T-cell (primary cell): ENCODE measurements at regions of chr13 and their contacts with region 1.

Region 1: DNA sequence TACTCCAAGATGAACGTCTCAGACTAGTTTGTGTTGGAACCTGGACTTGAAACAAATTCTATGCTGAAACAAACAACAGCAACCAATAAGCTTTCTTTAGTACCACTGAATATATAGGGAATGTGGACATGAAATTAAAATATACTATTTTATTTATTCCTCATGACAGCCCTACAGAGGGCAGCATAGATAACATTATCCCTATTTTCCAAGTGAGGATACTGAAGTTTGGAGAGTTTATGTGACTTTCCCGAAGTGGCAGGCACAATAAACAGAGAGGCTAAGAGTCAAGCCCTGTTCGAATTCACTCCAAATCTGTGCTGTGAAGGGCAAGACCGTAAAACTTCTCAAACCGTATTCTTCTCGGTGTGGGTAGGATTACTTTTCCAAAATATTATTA is 509.9 kb upstream of the GPC6 start:
- DNase-seq: no peak
- ATAC-seq: no peak
- H3K4me3 ChIP-seq: no peak overlapping the region
- H3K4me3 Mint-ChIP-seq: no peak overlapping the region
- H3K27ac ChIP-seq: no peak overlapping the region
- H3K27ac Mint-ChIP-seq: no peak overlapping the region
- H3K4me1 ChIP-seq: no peaks in the 10 kb centered on the region
- H3K4me1 Mint-ChIP-seq: no peaks in the 10 kb centered on the region
- H3K27me3 ChIP-seq: no peaks in the 10 kb centered on the region
- H3K27me3 Mint-ChIP-seq: no peaks in the 10 kb centered on the region

Region 2: DNA sequence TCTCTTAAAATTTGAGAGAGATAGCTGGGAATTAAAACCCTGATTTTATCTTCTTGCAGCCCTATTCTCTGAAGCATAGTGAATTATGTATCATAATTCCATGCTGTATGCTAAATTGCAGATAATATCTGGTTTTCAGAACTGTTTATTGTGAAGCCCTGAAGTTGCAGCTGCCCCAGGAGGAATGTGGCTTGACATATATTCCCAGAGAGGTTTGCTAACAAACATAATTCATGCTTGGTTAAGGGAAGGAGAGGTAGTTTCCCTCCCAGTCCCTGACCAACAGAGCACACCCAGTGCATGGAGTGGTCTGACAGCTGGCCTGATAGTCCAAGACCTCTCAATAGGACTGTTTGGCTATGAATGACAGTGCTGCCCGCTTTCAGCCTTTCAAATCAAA is 1869.8 kb before region 1 on chr13:
- CTCF ChIA-PET with region 1: interaction called in 1 of 2 experiments, 12 read pairs
- POLR2A ChIA-PET with region 1: no interaction called
- DNase-seq: no peak
- ATAC-seq: no peak
- H3K4me3 ChIP-seq: no peak overlapping the region
- H3K4me3 Mint-ChIP-seq: no peak overlapping the region
- H3K27ac ChIP-seq: no peak overlapping the region
- H3K27ac Mint-ChIP-seq: no peak overlapping the region
- H3K4me1 ChIP-seq: no peaks in the 10 kb centered on the region
- H3K4me1 Mint-ChIP-seq: no peaks in the 10 kb centered on the region
- H3K27me3 ChIP-seq: no peaks in the 10 kb centered on the region
- H3K27me3 Mint-ChIP-seq: no peaks in the 10 kb centered on the region